ENCODE measurements at regions of chr16 and their contacts with region 1.

Region 1: GRCh38 chr16:67561824-67562525 is 351 bp upstream of the CTCF start:
- DNase-seq: peak; percentile 89
- ATAC-seq: peak; percentile 91
- H3K4me3 ChIP-seq: peak overlapping the region; percentile 74
- H3K27ac ChIP-seq: peak overlapping the region; percentile 87
- H3K4me1 ChIP-seq: peaks cover 15% of the 10 kb centered on the region
- H3K27me3 ChIP-seq: no peaks in the 10 kb centered on the region
- CTCF ChIP-seq: no peak
- EP300 ChIP-seq: 0 out of 4 replicates have a peak, but pooled peaks of 1 of the 2 experiments have one; percentile 10
- POLR2A ChIP-seq: peak; percentile 83
- RAD21 ChIP-seq: no peak

Region 2: GRCh38 chr16:67326472-67327309 is 235.3 kb before region 1 on chr16 and contains the starts of genes KCTD19 and LRRC36:
- CTCF ChIA-PET with region 1: no interaction called
- POLR2A ChIA-PET with region 1: no interaction called
- RAD21 ChIA-PET with region 1: no interaction called
- SMC1A ChIA-PET with region 1: no interaction called
- in situ Hi-C with region 1: no loop called
- intact Hi-C with region 1: no loop called
- DNase-seq: no peak
- ATAC-seq: peak; percentile 72
- H3K4me3 ChIP-seq: peak within 1 kb of the TSS; percentile 74
- H3K27ac ChIP-seq: peak within 1 kb of the TSS; percentile 29; the same call in 1 of the 2 replicates
- H3K4me1 ChIP-seq: peaks cover 22% of the 10 kb centered on the region
- H3K27me3 ChIP-seq: no peaks in the 10 kb centered on the region; a peak in 1 of 4 replicates
- CTCF ChIP-seq: peak; percentile 31 to 51 (median 46)
- EP300 ChIP-seq: no peak
- POLR2A ChIP-seq: peak; percentile 40; the same call in 1 of the 2 replicates
- RAD21 ChIP-seq: no peak
- polyA plus RNA-seq, gene KCTD19: 1.6 to 2.5 TPM
- polyA plus RNA-seq, gene LRRC36: 0.69 to 0.79 TPM

Region 3: GRCh38 chr16:67445441-67445912 is 116.5 kb before region 1 on chr16:
- CTCF ChIA-PET with region 1: no interaction called
- POLR2A ChIA-PET with region 1: no interaction called
- RAD21 ChIA-PET with region 1: no interaction called
- SMC1A ChIA-PET with region 1: no interaction called
- in situ Hi-C with region 1: no loop called
- intact Hi-C with region 1: no loop called
- DNase-seq: no peak
- ATAC-seq: no peak
- H3K4me3 ChIP-seq: no peak overlapping the region
- H3K27ac ChIP-seq: no peak overlapping the region
- H3K4me1 ChIP-seq: no peaks in the 10 kb centered on the region
- H3K27me3 ChIP-seq: no peaks in the 10 kb centered on the region
- CTCF ChIP-seq: no peak
- EP300 ChIP-seq: no peak
- POLR2A ChIP-seq: no peak
- RAD21 ChIP-seq: no peak

Region 4: GRCh38 chr16:67530013-67530939 is 31.7 kb before region 1 on chr16:
- CTCF ChIA-PET with region 1: interaction called, 4 read pairs
- POLR2A ChIA-PET with region 1: interaction called, 25 read pairs
- RAD21 ChIA-PET with region 1: interaction called, 5 read pairs
- SMC1A ChIA-PET with region 1: interaction called, 5 read pairs
- in situ Hi-C with region 1: no loop called
- intact Hi-C with region 1: no loop called
- DNase-seq: no peak
- ATAC-seq: peak; percentile 66
- H3K4me3 ChIP-seq: peak overlapping the region; percentile 90; the same call in 1 of the 2 replicates
- H3K27ac ChIP-seq: peak overlapping the region; percentile 22; the same call in 1 of the 2 replicates
- H3K4me1 ChIP-seq: peaks cover 34% of the 10 kb centered on the region
- H3K27me3 ChIP-seq: no peaks in the 10 kb centered on the region
- CTCF ChIP-seq: no peak
- EP300 ChIP-seq: 0 out of 4 replicates have a peak, but pooled peaks of 1 of the 2 experiments have one; percentile 5
- POLR2A ChIP-seq: peak; percentile 57
- RAD21 ChIP-seq: no peak

Region 5: GRCh38 chr16:67660564-67661028 is 98.6 kb after region 1 on chr16 and contains the start of gene PARD6A:
- CTCF ChIA-PET with region 1: interaction called, 12 read pairs
- POLR2A ChIA-PET with region 1: interaction called, 13 read pairs
- RAD21 ChIA-PET with region 1: interaction called, 6 read pairs
- SMC1A ChIA-PET with region 1: interaction called, 3 read pairs
- in situ Hi-C with region 1: no loop called
- intact Hi-C with region 1: loop called (anchors 1 kb)
- DNase-seq: peak; percentile 87
- ATAC-seq: peak; percentile 84
- H3K4me3 ChIP-seq: peak within 1 kb of the TSS; percentile 92
- H3K27ac ChIP-seq: peak within 1 kb of the TSS; percentile 80
- H3K4me1 ChIP-seq: peaks cover 10% of the 10 kb centered on the region
- H3K27me3 ChIP-seq: no peaks in the 10 kb centered on the region
- CTCF ChIP-seq: no peak
- EP300 ChIP-seq: no peak
- POLR2A ChIP-seq: no peak
- RAD21 ChIP-seq: no peak
- polyA plus RNA-seq, gene PARD6A: 0.42 to 0.62 TPM

Measured in GM12878 (cell line).